Activated naive CD4-positive, alpha-beta T cell treated with anti-CD3 and anti-CD28 coated beads for 36 hours (primary cell): ENCODE measurements at regions of chr4 and their contacts with region 1.

Region 1: GRCh38 chr4:119212234-119212963 is at the start of gene USP53:
- DNase-seq: peak; percentile 98
- H3K4me3 Mint-ChIP-seq: peak within 1 kb of the TSS; percentile 90
- H3K27ac Mint-ChIP-seq: peak within 1 kb of the TSS; percentile 92
- H3K4me1 Mint-ChIP-seq: peaks cover 33% of the 10 kb centered on the region
- H3K27me3 Mint-ChIP-seq: no peaks in the 10 kb centered on the region
- total RNA-seq, gene USP53: 8.6 to 9.3 TPM

Region 2: GRCh38 chr4:118835571-118836300 is 376.7 kb before region 1 on chr4 and contains the start of gene SEC24D:
- CTCF ChIA-PET with region 1: interaction called, 4 read pairs
- intact Hi-C with region 1: loop called (anchors 1 kb)
- DNase-seq: peak; percentile 78
- H3K4me3 Mint-ChIP-seq: peak within 1 kb of the TSS; percentile 100
- H3K27ac Mint-ChIP-seq: peak within 1 kb of the TSS; percentile 99
- H3K4me1 Mint-ChIP-seq: peaks cover 15% of the 10 kb centered on the region
- H3K27me3 Mint-ChIP-seq: no peaks in the 10 kb centered on the region
- total RNA-seq, gene SEC24D: 28.4 to 29.7 TPM

Region 3: GRCh38 chr4:118888666-118889311 is 323.6 kb before region 1 on chr4 and contains the start of gene SYNPO2:
- CTCF ChIA-PET with region 1: no interaction called
- intact Hi-C with region 1: no loop called
- DNase-seq: peak; percentile 43
- H3K4me3 Mint-ChIP-seq: peak within 1 kb of the TSS; percentile 70
- H3K27ac Mint-ChIP-seq: no peak within 1 kb of the TSS
- H3K4me1 Mint-ChIP-seq: peaks cover 14% of the 10 kb centered on the region
- H3K27me3 Mint-ChIP-seq: peaks cover 30% of the 10 kb centered on the region
- total RNA-seq, gene SYNPO2: 0.14 TPM in 1 of 2 experiments, not detected in the other

Region 4: DNA sequence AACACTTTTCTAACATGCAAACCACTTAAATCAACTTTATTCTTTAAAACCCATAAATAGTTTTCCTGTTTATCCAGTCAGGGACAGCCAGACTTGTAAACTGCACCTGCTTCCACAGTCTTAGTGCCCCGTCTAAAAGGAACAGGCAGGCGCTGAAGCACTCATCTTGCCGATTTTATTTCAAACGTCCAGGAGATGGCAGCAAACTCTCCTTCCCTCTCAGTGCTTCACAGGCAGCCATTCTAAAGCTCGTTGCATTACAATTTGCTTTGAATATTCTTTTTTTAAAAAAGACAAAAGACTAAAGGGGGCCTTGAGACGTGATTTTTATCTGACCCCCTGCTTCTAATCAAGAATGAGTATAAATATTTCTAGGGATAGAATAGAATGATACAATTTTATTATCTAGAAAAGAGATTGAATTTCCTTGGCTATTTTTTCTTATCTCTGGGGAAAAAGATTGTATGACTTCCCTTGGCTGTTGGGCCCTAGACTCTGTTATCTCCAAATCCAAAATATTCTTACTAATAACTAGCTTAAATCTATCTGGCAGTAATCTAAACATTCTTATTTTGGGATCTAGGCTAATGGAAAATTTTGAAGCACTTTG is 170.3 kb before region 1 on chr4:
- CTCF ChIA-PET with region 1: interaction called, 14 read pairs
- intact Hi-C with region 1: loop called (anchors 1 kb)
- DNase-seq: peak; percentile 75
- H3K4me3 Mint-ChIP-seq: no peak overlapping the region
- H3K27ac Mint-ChIP-seq: no peak overlapping the region
- H3K4me1 Mint-ChIP-seq: peaks cover 13% of the 10 kb centered on the region
- H3K27me3 Mint-ChIP-seq: no peaks in the 10 kb centered on the region

Region 5: DNA sequence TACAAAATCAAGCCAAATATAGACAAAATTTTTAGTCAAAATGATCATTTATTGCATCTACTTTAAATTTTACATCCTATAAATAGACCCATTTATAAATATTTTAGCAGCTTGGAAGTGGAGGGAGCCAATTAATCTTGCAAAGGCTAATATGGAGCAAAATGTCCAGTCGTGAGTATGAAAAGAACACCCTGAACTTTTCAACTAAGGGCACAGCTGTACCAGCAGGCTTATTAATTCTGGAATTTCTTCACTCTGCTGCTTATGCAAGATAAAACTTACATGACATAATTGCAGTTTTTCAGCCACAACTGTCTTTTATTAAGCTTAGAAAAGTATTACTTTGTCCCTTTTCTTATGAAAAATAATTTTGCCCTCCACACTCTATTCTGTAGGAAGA is 22.8 kb before region 1 on chr4:
- CTCF ChIA-PET with region 1: no interaction called
- intact Hi-C with region 1: no loop called
- DNase-seq: no peak
- H3K4me3 Mint-ChIP-seq: no peak overlapping the region
- H3K27ac Mint-ChIP-seq: no peak overlapping the region
- H3K4me1 Mint-ChIP-seq: no peaks in the 10 kb centered on the region
- H3K27me3 Mint-ChIP-seq: no peaks in the 10 kb centered on the region

Region 6: GRCh38 chr4:119238068-119238722 is 25.8 kb after region 1 on chr4:
- CTCF ChIA-PET with region 1: interaction called, 7 read pairs
- intact Hi-C with region 1: loop called (anchors 1 kb)
- DNase-seq: peak; percentile 60
- H3K4me3 Mint-ChIP-seq: no peak overlapping the region
- H3K27ac Mint-ChIP-seq: peak overlapping the region; percentile 72
- H3K4me1 Mint-ChIP-seq: peaks cover 38% of the 10 kb centered on the region
- H3K27me3 Mint-ChIP-seq: no peaks in the 10 kb centered on the region

Region 7: GRCh38 chr4:119300101-119300978 is 87.9 kb after region 1 on chr4:
- CTCF ChIA-PET with region 1: interaction called, 5 read pairs
- intact Hi-C with region 1: loop called (anchors 1 kb)
- DNase-seq: peak; percentile 92
- H3K4me3 Mint-ChIP-seq: peak overlapping the region; percentile 97
- H3K27ac Mint-ChIP-seq: peak overlapping the region; percentile 95
- H3K4me1 Mint-ChIP-seq: peaks cover 25% of the 10 kb centered on the region
- H3K27me3 Mint-ChIP-seq: no peaks in the 10 kb centered on the region